Mucosa of descending colon (tissue), 3 donors: ENCODE measurements at regions of chr20 and their contacts with region 1.

Region 1: DNA sequence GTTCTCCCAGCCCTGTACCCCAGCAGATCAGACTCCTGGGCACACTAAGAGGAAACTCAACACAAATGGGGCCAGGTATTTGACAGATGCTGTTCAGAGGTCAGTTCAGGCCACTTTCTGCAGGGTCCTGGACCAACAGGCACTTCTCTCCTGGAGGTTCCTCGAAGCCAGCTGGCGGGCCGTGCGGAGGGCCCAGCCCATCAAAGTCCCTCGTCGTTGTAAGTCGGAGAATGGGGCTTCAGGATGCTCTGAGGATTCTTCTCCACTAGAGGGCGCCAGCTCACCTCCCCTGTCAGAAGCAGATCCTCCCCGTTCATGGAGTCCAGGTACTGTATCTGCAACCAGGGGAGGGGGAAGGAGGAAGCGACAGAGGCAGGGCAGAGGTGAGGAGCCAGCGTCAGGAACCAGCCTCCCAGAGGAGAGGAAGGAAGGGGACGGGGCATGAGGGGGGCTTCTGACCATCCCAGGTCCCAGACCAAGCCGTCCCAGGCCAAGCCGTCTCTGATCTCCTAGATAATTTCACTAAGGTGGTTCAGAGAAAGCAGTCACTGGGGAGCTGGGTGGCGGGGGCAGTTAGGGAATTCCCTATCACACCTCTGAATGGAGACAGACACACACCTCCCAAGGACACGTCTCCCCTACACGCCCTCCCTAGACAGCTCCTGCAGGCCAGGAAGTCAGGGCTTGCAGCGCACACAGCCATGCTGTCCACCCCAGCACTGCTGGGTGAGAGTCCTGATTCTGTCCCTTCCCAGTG is 11.7 kb upstream of the FAM83C start:
- DNase-seq: peak; percentile 72 to 94 (median 80)
- ATAC-seq: peak; percentile 86
- H3K4me3 ChIP-seq: no peak overlapping the region
- H3K4me1 ChIP-seq: peaks cover 9% of the 10 kb centered on the region
- CTCF ChIP-seq: peak; percentile 71

Region 2: DNA sequence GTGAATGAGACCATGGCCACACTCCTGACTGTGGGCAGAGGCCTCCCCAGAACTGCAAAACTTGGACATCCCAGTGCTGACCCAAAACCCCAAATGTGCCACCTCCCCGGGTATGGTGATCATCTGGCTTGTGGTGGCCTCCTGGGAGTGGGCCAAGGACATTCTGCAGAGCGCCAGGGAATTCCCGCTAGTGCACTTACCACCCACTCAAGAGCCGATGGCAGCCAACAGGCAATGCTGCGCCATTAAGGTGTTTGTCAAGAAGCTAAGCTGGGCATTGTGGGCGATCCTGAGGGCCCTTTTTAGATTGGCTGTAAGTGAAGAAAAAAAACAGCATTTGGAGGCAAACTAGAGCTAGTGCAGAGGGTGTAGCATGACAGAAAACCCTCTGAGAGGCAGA is 68.0 kb before region 1 on chr20:
- intact Hi-C with region 1: no loop called
- DNase-seq: no peak
- ATAC-seq: no peak
- H3K4me3 ChIP-seq: no peak overlapping the region
- H3K4me1 ChIP-seq: no peaks in the 10 kb centered on the region
- CTCF ChIP-seq: no peak

Region 3: DNA sequence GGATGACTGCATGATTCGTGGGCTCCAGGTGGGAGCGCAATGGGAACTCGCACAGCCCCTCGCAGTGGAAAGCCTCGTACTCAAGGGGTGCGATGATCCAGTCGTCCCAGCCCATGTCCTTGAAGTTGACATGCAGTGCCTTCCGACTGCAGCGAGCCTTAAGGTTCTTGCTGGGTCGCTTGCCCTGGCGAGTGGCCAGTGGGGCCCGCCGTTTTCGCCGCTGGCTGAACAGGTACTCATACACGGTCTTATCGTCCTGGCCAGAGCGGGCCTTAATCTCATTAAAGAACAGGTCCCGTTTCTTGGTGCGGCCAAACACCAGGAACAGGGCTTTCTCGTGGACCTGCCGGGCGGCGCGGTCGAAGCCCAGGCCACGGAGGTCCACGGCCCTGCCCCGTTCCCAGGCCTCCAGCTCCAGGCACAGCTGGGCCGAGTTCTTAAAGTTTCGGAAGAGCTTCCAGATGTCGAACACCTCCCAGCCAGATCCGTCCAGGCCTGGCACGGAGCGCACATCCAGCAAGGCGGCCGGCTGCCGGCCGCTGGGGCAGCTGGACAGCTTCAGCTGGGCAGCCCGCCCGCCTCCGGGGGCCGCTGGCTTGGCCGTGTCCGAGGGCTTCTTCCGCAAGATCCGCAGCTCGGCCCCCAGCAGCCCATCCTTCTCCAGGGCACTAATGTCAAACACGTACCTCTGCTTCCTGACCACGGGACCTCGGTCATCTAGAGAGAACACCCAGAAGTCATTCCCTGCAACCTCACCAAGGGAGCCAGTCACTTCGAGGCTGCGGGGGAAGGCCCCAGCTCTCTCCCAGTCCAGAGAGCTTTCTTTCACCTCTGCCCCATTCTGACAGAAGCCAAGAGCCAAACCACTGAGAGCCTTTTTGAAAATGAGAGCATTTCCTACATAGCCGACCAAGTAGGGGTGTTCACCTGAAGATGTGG is 130.4 kb after region 1 on chr20:
- intact Hi-C with region 1: loop called in 1 of 2 experiments (anchors 5 kb)
- DNase-seq: peak in 2 of 3 donors; percentile 32 to 55
- ATAC-seq: peak; percentile 8
- H3K4me3 ChIP-seq: no peak overlapping the region
- H3K4me1 ChIP-seq: no peaks in the 10 kb centered on the region
- CTCF ChIP-seq: no peak

Region 4: GRCh38 chr20:35447082-35447789 is 143.3 kb after region 1 on chr20:
- intact Hi-C with region 1: loop called in 1 of 2 experiments (anchors 5 kb)
- DNase-seq: peak; percentile 83 to 97 (median 95)
- ATAC-seq: peak; percentile 98
- H3K4me3 ChIP-seq: no peak overlapping the region
- H3K4me1 ChIP-seq: no peaks in the 10 kb centered on the region
- CTCF ChIP-seq: peak; percentile 98